ENCODE measurements at regions of chr9 and their contacts with region 1.

Region 1: DNA sequence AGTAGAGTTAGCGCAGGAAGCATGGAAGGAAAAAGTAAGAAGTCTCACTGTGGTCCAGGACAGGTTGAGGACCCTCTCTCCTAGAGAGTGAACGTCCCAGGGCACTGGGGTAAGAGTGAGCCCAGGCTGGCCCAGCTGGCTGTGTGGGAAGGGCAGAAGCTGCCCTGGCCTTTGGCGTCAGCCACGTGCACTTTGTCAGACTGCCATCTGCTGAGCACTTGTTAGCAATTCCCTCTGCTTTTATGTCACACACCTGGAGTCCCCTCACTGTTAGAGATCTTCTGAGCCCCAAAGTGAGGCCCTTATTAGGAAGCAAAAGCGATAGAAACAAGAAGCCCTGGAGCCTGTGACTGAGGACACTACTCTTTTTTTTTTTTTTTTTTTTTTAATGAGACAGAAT is 79.1 kb downstream of the UGCG start:
- DNase-seq: peak; percentile 55
- H3K4me3 Mint-ChIP-seq: no peak overlapping the region
- H3K27ac Mint-ChIP-seq: no peak overlapping the region
- H3K4me1 Mint-ChIP-seq: peaks cover 8% of the 10 kb centered on the region
- H3K27me3 Mint-ChIP-seq: no peaks in the 10 kb centered on the region

Region 2: GRCh38 chr9:111759762-111760639 is 215.7 kb before region 1 on chr9:
- CTCF ChIA-PET with region 1: interaction called, 7 read pairs
- intact Hi-C with region 1: loop called (anchors 1 kb)
- DNase-seq: peak; percentile 71
- H3K4me3 Mint-ChIP-seq: no peak overlapping the region
- H3K27ac Mint-ChIP-seq: no peak overlapping the region
- H3K4me1 Mint-ChIP-seq: peaks cover 4% of the 10 kb centered on the region
- H3K27me3 Mint-ChIP-seq: no peaks in the 10 kb centered on the region